ENCODE measurements at regions of chr5 and their contacts with region 1.

Region 1: GRCh38 chr5:147576646-147577535 is 67.0 kb upstream of the DPYSL3 start:
- DNase-seq: peak; percentile 54 to 75
- H3K4me3 ChIP-seq: no peak overlapping the region
- H3K27ac ChIP-seq: no peak overlapping the region
- H3K4me1 ChIP-seq: no peaks in the 10 kb centered on the region
- H3K27me3 ChIP-seq: no peaks in the 10 kb centered on the region
- CTCF ChIP-seq: peak; percentile 77 to 85

Region 2: DNA sequence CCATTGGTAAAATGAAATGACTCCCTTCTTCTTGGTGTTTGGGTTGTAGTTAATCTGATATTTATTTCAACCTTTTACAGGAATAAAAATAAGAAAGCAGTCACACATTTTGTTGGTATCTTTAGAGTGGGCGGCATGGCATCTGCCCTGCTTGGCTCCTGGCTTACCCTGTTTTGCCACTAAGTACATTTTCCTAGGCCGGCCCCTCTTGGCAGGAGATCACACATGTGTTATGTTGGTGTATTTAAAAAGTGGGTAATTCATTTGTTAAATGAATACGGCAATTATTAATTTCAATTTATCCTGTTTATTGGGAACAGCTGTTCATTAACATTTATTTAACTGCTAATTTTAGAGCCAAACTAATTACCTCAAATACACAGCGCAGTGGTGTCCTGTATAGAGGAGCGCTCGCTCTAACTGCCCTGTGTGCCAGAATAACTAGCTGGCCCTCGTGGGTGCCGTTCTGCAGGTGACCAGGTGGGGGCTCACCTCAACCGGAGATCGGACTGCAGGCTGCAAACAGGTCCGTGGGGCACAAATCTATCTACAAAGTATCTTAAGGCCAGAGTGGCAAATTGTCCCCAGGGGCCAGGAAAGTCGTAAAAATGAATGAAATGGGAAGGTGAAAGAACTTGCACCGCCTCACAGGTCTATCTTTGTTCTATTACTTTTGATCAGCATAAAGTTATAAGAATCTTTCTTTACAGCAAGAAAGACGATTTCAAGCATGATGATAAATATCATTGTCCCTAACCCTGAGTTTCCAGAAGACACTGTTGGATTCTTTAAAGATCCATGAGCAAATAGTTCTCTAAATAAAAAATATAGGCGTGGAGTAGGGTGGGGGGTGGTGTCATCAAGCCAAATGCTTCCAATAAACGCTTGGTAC is 1034.7 kb before region 1 on chr5:
- intact Hi-C with region 1: loop called (anchors 5 kb)
- DNase-seq: peak; percentile 67 to 83
- H3K4me3 ChIP-seq: no peak overlapping the region
- H3K27ac ChIP-seq: no peak overlapping the region
- H3K4me1 ChIP-seq: peaks cover 0 to 6% (median 2%) of the 10 kb centered on the region in 4 donors
- H3K27me3 ChIP-seq: no peaks in the 10 kb centered on the region
- CTCF ChIP-seq: peak; percentile 80 to 87

Region 3: DNA sequence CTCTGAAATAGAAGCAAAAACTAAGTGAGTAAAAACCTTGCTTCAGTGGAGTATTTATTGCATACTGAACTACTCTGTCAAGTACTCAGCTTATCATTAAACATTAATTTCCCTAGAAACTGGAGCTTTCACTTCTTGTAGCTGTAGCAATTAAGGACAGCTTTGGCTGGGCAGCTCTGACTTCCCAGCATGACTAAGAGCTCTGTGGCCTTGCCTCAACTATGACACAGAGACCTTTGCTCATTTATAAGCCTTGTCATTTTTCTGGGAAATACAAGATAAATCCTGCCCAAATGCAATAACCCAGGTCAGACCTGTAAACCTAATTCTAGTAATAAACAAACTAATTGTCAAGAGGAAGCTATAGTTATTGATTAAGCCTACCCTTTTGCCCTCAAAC is 407.5 kb before region 1 on chr5:
- intact Hi-C with region 1: no loop called
- DNase-seq: no peak
- H3K4me3 ChIP-seq: no peak overlapping the region
- H3K27ac ChIP-seq: no peak overlapping the region
- H3K4me1 ChIP-seq: no peaks in the 10 kb centered on the region
- H3K27me3 ChIP-seq: no peaks in the 10 kb centered on the region
- CTCF ChIP-seq: no peak

Region 4: DNA sequence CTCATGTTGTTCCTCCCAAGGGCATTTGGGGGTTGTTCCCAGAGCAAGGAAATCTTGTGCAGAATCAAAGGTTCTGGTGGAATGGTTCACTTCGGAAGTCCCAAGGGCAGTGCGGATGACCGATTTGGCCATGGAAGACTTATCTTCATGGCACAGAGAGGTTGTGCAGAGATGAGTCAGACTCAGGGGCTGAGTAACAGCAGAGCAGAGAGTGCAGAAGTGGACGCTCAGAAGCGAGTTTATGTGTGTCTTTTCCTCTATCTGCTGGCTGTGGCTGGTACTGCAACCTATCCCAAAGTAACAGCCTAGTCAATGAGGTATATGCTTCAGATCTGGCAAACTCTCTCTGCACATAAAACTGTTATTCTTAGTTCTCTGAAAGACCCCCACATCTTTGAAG is 185.1 kb before region 1 on chr5:
- intact Hi-C with region 1: loop called (anchors 5 kb)
- DNase-seq: peak; percentile 77 to 79
- H3K4me3 ChIP-seq: no peak overlapping the region
- H3K27ac ChIP-seq: peak overlapping the region in 1 of 2 donors; percentile 31
- H3K4me1 ChIP-seq: no peaks in the 10 kb centered on the region
- H3K27me3 ChIP-seq: no peaks in the 10 kb centered on the region
- CTCF ChIP-seq: peak; percentile 58 to 63

Region 5: DNA sequence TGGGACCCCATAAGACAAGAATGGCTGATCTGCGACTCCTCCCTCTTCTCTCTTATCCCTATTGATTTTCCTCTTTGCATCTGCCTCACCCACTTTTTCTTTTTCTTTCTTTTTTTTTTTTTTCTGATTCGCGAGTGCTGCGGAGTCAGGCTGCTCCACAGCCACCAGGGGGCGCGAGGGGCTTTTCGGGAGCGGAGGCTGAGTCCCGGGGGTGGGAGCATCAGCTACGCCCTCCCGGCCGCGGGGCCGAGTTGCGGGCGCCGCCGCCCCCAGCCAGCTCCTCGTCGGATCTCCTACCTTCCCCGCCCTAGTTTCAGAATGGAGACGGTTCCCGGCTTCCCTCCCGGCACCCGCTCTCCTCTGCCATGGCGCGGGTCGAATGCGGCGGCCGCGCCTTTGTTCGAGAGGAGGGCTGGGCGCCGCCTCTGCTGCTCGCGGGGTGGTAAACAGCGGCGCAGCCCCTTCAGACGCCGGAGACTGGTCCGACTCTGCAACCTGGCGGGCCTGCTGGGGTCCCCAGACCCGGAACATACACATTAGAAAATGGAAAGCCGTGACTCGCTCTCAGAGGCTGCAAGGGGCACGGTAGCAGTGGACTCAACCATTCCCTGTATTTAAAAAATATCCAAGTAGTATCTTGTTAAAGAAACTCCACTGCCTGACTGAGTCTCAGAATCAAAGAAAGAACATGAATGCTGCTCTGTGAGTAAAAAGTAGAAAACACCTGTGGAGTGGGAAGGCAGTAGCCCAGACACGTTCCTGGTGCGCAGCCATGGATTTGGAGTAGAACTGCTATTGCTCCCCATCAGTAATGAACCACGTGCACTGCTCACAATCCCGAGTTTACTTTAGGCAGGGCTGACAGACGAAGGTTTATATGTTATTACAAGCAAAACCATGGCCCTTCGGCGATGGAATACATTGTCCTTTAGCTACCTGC is 122.7 kb before region 1 on chr5:
- intact Hi-C with region 1: no loop called
- DNase-seq: peak; percentile 84 to 95
- H3K4me3 ChIP-seq: peak overlapping the region; percentile 80 to 95
- H3K27ac ChIP-seq: peak overlapping the region; percentile 93 to 99
- H3K4me1 ChIP-seq: peaks cover 0 to 49% (median 36%) of the 10 kb centered on the region in 4 donors
- H3K27me3 ChIP-seq: no peaks in the 10 kb centered on the region
- CTCF ChIP-seq: peak; percentile 85 to 90